ENCODE measurements at regions of chr1 and their contacts with region 1.

Region 1: GRCh38 chr1:58903514-58904298 is 119.9 kb upstream of the JUN start:
- H3K4me3 Mint-ChIP-seq: peak overlapping the region; percentile 75
- H3K27ac Mint-ChIP-seq: peak overlapping the region; percentile 95
- H3K4me1 Mint-ChIP-seq: peaks cover 69% of the 10 kb centered on the region
- H3K27me3 Mint-ChIP-seq: no peaks in the 10 kb centered on the region

Region 2: GRCh38 chr1:59290193-59290947 is 386.7 kb after region 1 on chr1:
- intact Hi-C with region 1: loop called (anchors 5 kb)
- H3K4me3 Mint-ChIP-seq: no peak overlapping the region
- H3K27ac Mint-ChIP-seq: peak overlapping the region; percentile 71
- H3K4me1 Mint-ChIP-seq: peaks cover 52% of the 10 kb centered on the region
- H3K27me3 Mint-ChIP-seq: no peaks in the 10 kb centered on the region